K562 (cell line): ENCODE measurements at regions of chr4 and their contacts with region 1.

Region 1: GRCh38 chr4:39134683-39135319 is 47.5 kb upstream of the WDR19 start:
- DNase-seq: no peak
- ATAC-seq: no peak
- H3K4me3 ChIP-seq: no peak overlapping the region
- H3K27ac ChIP-seq: no peak overlapping the region
- H3K4me1 ChIP-seq: peaks cover 0 to 2% of the 10 kb centered on the region in 2 experiments; a peak in 1 of 5 replicates
- H3K27me3 ChIP-seq: no peaks in the 10 kb centered on the region
- CTCF ChIP-seq: no peak
- EP300 ChIP-seq: no peak
- POLR2A ChIP-seq: no peak
- RAD21 ChIP-seq: no peak

Region 2: GRCh38 chr4:38902695-38903094 is 232.1 kb before region 1 on chr4:
- CTCF ChIA-PET with region 1: interaction called, 15 read pairs
- POLR2A ChIA-PET with region 1: interaction called, 6 read pairs
- in situ Hi-C with region 1: loop called (anchors 5 kb)
- intact Hi-C with region 1: loop called (anchors 1 kb)
- DNase-seq: peak in 3 of 4 experiments; percentile 18 to 43 (median 27)
- ATAC-seq: peak; percentile 88
- H3K4me3 ChIP-seq: no peak overlapping the region
- H3K27ac ChIP-seq: no peak overlapping the region
- H3K4me1 ChIP-seq: peaks cover 0 to 2% of the 10 kb centered on the region in 2 experiments; a peak in 1 of 5 replicates
- H3K27me3 ChIP-seq: no peaks in the 10 kb centered on the region
- CTCF ChIP-seq: peak in 2 of 3 experiments; percentile 14 to 58; a peak in 2 of 6 replicates
- EP300 ChIP-seq: no peak
- POLR2A ChIP-seq: no peak
- RAD21 ChIP-seq: peak; percentile 71 to 86